K562 (cell line): ENCODE measurements at regions of chr4 and their contacts with region 1.

Region 1: DNA sequence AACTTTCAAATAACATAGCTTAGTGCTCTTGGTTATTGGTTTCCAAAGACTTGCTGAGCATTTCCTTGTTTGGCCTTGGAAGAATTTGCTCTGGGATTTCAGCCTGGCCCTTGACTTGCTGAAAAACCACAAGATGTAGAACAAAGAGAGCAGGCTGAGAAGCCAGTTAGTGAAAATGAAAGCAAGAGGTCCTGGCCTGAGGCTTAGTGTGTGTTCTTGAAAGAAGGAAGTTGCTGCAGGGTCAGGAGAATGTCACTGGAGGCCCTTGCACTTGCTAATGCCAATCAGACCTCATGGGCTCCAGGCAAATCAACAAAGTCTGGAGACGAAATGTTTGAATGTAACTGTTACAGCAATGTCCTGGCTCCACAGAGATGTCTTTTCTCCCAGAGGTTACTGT is 79.4 kb downstream of the SYNPO2 start:
- DNase-seq: no peak
- ATAC-seq: peak; percentile 54; the same call in 2 of the 3 replicates
- H3K4me3 ChIP-seq: no peak overlapping the region
- H3K27ac ChIP-seq: no peak overlapping the region
- H3K4me1 ChIP-seq: no peaks in the 10 kb centered on the region
- H3K27me3 ChIP-seq: no peaks in the 10 kb centered on the region
- CTCF ChIP-seq: no peak
- EP300 ChIP-seq: no peak
- POLR2A ChIP-seq: no peak
- RAD21 ChIP-seq: no peak

Region 2: DNA sequence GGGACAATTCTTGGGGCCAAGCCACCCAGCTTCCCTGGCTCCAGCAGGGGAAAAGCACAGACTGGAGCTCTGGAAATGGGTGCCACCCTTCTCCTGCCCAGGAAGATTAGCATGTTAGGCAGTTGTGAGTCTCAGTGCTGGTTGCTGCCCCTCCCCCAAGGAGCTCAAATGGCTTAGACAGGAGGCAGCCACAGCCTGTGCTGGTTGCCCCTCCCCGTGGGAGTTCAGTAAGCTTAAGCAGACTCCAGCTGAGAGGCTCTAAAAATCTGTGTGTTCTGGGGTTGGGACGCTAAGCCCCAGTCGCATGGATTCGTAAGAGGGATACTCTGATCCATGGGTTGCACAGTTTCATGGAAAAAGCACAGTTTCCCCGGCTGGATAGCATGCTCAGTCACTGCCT is 1026.4 kb before region 1 on chr4:
- CTCF ChIA-PET with region 1: no interaction called
- POLR2A ChIA-PET with region 1: no interaction called
- in situ Hi-C with region 1: no loop called
- intact Hi-C with region 1: no loop called
- DNase-seq: no peak
- ATAC-seq: no peak
- H3K4me3 ChIP-seq: no peak overlapping the region
- H3K27ac ChIP-seq: no peak overlapping the region
- H3K4me1 ChIP-seq: no peaks in the 10 kb centered on the region
- H3K27me3 ChIP-seq: no peaks in the 10 kb centered on the region
- CTCF ChIP-seq: no peak
- EP300 ChIP-seq: no peak
- POLR2A ChIP-seq: no peak
- RAD21 ChIP-seq: no peak

Region 3: GRCh38 chr4:118740869-118741268 is 227.1 kb before region 1 on chr4:
- CTCF ChIA-PET with region 1: interaction called, 12 read pairs
- POLR2A ChIA-PET with region 1: no interaction called
- in situ Hi-C with region 1: no loop called
- intact Hi-C with region 1: loop called (anchors 5 kb)
- DNase-seq: peak in 3 of 4 experiments; percentile 16 to 18 (median 17)
- ATAC-seq: no peak
- H3K4me3 ChIP-seq: no peak overlapping the region
- H3K27ac ChIP-seq: no peak overlapping the region
- H3K4me1 ChIP-seq: no peaks in the 10 kb centered on the region
- H3K27me3 ChIP-seq: no peaks in the 10 kb centered on the region
- CTCF ChIP-seq: peak in 1 of 3 experiments; percentile 47; a peak in 2 of 6 replicates
- EP300 ChIP-seq: no peak
- POLR2A ChIP-seq: no peak
- RAD21 ChIP-seq: peak; percentile 43 to 44

Region 4: DNA sequence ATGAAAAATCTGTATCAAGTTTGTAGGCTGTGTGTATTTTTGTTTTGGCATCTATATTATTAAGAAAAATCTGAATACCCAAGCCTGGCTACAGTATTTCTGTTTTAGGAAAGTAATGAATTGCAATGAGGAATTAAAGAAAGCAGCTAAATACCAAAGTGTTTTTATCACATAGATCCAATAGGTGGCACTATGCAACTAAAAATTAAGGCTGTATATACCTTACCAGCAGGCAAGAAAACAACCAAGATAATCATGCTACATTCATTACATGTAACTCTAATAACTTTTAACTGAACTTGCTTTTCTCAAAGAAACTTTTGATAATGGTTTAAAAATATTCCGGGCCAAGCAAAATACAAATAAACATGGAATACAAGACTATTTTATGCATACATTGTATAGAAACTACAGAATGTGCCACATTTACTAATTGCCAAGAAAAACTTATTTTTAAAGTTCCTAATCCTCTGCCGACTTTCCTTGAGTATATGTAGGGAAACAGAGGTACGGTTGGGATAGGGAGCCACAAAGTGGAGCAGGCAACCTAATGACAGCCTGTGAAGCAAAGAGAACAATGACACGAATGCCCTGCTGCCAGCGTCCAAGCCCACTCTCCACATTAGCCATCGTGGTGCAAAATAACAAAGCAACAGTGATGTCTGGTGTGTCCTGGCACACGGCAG is 195.8 kb before region 1 on chr4:
- CTCF ChIA-PET with region 1: interaction called, 3 read pairs
- POLR2A ChIA-PET with region 1: no interaction called
- in situ Hi-C with region 1: no loop called
- intact Hi-C with region 1: loop called (anchors 1 kb)
- DNase-seq: peak in 3 of 4 experiments; percentile 12 to 44 (median 44)
- ATAC-seq: peak; percentile 84
- H3K4me3 ChIP-seq: no peak overlapping the region
- H3K27ac ChIP-seq: no peak overlapping the region
- H3K4me1 ChIP-seq: peaks cover 0 to under 1% of the 10 kb centered on the region in 2 experiments; a peak in 2 of 5 replicates
- H3K27me3 ChIP-seq: no peaks in the 10 kb centered on the region
- CTCF ChIP-seq: peak in 2 of 3 experiments; percentile 43 to 69; a peak in 3 of 6 replicates
- EP300 ChIP-seq: no peak
- POLR2A ChIP-seq: no peak
- RAD21 ChIP-seq: peak; percentile 63 to 70

Region 5: DNA sequence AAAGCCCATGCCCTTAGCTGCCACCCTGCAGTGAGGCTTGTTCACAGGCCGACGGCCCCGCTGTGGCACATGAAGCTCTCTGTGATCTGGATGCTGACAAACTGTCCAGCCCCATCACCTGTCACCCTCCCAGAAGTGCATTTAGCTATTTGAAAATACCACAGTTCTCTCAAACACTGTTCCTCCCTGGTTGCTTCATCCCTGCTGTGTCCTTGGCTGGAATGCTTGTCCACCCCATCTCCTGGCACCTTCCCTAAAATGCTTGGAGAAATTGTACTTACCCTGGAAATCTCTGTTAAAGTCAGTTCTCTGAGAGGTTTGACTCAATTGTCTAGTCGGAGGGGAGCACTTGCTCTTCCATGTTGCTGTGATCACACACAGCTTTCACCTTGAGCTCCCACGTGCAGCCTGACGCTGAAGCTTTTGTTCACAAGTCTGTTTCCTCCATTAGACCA is 69.3 kb before region 1 on chr4:
- CTCF ChIA-PET with region 1: no interaction called
- POLR2A ChIA-PET with region 1: no interaction called
- in situ Hi-C with region 1: no loop called
- intact Hi-C with region 1: loop called (anchors 5 kb)
- DNase-seq: no peak
- ATAC-seq: no peak
- H3K4me3 ChIP-seq: no peak overlapping the region
- H3K27ac ChIP-seq: no peak overlapping the region
- H3K4me1 ChIP-seq: no peaks in the 10 kb centered on the region
- H3K27me3 ChIP-seq: peaks cover 2 to 5% of the 10 kb centered on the region in 2 experiments; a peak in 2 of 5 replicates
- CTCF ChIP-seq: no peak
- EP300 ChIP-seq: no peak
- POLR2A ChIP-seq: no peak
- RAD21 ChIP-seq: no peak